ENCODE measurements at regions of chr7 and their contacts with region 1.

Region 1: GRCh38 chr7:116236020-116236630 is 25.8 kb downstream of the TES start:
- DNase-seq: peak; percentile 66
- ATAC-seq: no peak
- H3K4me3 Mint-ChIP-seq: no peak overlapping the region
- H3K27ac Mint-ChIP-seq: no peak overlapping the region
- H3K4me1 Mint-ChIP-seq: peaks cover 70% of the 10 kb centered on the region
- H3K27me3 Mint-ChIP-seq: no peaks in the 10 kb centered on the region

Region 2: DNA sequence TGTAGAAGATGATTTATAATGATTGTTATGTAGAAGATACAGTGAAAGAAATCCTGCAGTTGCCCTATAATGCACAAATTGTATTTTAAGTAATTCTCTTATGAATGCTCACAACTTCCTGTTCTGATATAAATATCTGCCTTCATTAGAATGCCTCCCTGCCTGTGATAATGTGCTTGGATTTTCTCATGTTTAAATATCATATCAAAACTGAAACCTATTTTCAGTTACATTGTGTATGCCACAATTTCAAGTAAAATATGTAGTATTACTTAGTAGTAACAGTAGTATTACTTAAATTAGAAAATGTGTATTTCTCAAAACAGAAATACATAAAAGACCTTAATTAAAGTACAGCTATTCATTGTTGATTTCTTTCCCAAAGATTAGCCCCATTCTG is 164.5 kb before region 1 on chr7:
- CTCF ChIA-PET with region 1: no interaction called
- POLR2A ChIA-PET with region 1: no interaction called
- intact Hi-C with region 1: no loop called
- DNase-seq: no peak
- ATAC-seq: no peak
- H3K4me3 Mint-ChIP-seq: no peak overlapping the region
- H3K27ac Mint-ChIP-seq: no peak overlapping the region
- H3K4me1 Mint-ChIP-seq: no peaks in the 10 kb centered on the region
- H3K27me3 Mint-ChIP-seq: no peaks in the 10 kb centered on the region

Region 3: GRCh38 chr7:116138202-116138801 is 97.8 kb before region 1 on chr7:
- CTCF ChIA-PET with region 1: interaction called, 27 read pairs
- POLR2A ChIA-PET with region 1: no interaction called
- intact Hi-C with region 1: loop called in 1 of 2 experiments (anchors 1 kb)
- DNase-seq: peak; percentile 11
- ATAC-seq: peak; percentile 91
- H3K4me3 Mint-ChIP-seq: no peak overlapping the region
- H3K27ac Mint-ChIP-seq: no peak overlapping the region
- H3K4me1 Mint-ChIP-seq: peaks cover 9% of the 10 kb centered on the region
- H3K27me3 Mint-ChIP-seq: no peaks in the 10 kb centered on the region

Region 4: DNA sequence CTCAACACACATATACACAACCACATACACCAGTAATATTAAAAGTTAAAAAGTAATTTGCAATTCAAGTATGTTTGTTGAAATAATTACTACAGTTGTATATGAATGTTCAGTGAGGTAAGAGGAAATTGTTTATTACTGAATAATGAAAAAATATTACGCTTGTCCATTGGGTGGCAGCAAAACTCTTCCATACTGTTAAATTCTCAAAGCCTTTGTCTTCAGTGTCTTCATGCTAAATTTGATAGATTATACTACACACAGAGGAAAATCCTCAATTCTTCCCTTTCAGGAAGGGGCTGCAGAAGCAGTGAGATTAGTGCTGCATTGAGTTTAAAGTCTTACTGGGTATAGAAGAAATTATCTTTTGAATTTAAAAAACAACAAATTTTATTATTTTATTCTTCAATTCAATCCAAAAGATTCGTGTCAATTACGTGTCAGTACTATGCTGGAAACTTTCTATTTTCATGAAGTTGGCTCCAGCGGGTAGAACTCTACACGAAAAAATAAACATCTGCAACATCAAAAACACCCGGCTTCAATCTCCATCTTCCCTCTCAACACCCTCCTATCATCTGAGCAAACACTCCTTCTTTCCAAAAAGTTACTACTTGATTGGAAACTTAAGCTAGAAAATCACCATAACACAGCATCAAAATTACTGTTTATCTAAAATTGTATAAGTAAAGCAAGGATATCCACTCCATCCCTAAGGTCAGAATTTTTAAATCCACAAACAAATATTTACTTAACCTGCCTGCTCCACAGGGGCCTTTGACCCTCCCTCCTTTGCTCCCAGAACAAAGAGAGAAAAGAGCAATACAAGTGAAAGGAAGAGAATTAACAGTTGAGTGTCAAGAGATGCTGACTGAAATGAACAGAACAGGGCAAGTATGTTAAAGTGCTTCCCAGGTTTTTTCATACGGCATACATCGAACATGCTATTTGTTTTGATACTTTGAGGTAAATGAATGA is 62.8 kb before region 1 on chr7:
- CTCF ChIA-PET with region 1: interaction called, 293 read pairs
- POLR2A ChIA-PET with region 1: interaction called, 3 read pairs
- intact Hi-C with region 1: loop called in 1 of 2 experiments (anchors 2 kb)
- DNase-seq: peak; percentile 15
- ATAC-seq: no peak
- H3K4me3 Mint-ChIP-seq: no peak overlapping the region
- H3K27ac Mint-ChIP-seq: no peak overlapping the region
- H3K4me1 Mint-ChIP-seq: no peaks in the 10 kb centered on the region
- H3K27me3 Mint-ChIP-seq: peaks cover 6% of the 10 kb centered on the region

Region 5: DNA sequence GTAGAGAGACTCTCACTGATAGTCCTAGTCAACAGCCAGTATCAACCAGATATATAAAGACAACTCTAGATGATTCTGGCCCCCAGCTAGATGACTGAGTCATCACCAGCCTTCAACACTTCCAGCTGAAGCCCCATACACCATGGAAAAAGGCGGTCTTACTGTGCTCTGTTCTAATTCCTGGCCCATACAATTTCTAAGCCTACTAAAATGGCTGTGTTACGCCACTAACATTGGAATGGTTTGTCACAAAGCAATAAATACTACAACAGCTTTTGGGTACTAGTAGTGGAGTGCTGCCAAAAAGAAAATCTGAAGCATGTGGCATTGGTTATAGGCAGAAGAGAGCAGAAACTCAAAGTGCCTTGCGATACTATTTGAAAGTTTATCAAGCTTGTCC is 38.8 kb before region 1 on chr7:
- CTCF ChIA-PET with region 1: interaction called, 15 read pairs
- POLR2A ChIA-PET with region 1: no interaction called
- intact Hi-C with region 1: no loop called
- DNase-seq: no peak
- ATAC-seq: no peak
- H3K4me3 Mint-ChIP-seq: no peak overlapping the region
- H3K27ac Mint-ChIP-seq: no peak overlapping the region
- H3K4me1 Mint-ChIP-seq: no peaks in the 10 kb centered on the region
- H3K27me3 Mint-ChIP-seq: peaks cover 1% of the 10 kb centered on the region

Region 6: DNA sequence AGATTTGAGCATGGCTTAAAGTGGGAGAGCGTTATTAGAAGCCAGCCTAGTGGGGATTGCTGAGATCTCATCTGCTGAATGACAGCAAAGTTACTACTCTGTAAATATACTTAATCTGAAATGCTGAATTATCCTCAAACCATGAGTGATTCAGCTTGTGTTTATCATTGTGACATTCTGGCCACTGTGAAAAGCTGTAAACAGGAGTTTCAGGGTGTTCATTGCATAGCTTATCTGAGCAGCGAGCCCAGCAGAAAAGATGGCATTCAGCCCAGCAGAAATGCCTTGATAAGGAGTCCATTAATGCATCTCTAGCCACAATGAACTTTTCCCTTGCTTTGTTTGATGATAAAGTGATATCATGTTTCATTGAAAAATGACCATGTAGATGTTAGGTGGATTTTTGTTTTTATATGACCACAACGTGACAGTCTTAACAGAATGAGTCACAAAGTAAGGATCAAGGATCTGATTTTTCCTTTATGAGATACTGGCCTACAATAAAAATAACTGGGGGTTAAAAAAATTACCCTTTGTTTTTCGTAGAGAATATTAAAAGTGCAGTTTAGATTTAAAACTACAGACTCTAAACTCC is 18.0 kb before region 1 on chr7:
- CTCF ChIA-PET with region 1: interaction called, 24 read pairs
- POLR2A ChIA-PET with region 1: interaction called, 3 read pairs
- intact Hi-C with region 1: no loop called
- DNase-seq: no peak
- ATAC-seq: no peak
- H3K4me3 Mint-ChIP-seq: no peak overlapping the region
- H3K27ac Mint-ChIP-seq: peak overlapping the region; percentile 72
- H3K4me1 Mint-ChIP-seq: peaks cover 86% of the 10 kb centered on the region
- H3K27me3 Mint-ChIP-seq: no peaks in the 10 kb centered on the region

Region 7: DNA sequence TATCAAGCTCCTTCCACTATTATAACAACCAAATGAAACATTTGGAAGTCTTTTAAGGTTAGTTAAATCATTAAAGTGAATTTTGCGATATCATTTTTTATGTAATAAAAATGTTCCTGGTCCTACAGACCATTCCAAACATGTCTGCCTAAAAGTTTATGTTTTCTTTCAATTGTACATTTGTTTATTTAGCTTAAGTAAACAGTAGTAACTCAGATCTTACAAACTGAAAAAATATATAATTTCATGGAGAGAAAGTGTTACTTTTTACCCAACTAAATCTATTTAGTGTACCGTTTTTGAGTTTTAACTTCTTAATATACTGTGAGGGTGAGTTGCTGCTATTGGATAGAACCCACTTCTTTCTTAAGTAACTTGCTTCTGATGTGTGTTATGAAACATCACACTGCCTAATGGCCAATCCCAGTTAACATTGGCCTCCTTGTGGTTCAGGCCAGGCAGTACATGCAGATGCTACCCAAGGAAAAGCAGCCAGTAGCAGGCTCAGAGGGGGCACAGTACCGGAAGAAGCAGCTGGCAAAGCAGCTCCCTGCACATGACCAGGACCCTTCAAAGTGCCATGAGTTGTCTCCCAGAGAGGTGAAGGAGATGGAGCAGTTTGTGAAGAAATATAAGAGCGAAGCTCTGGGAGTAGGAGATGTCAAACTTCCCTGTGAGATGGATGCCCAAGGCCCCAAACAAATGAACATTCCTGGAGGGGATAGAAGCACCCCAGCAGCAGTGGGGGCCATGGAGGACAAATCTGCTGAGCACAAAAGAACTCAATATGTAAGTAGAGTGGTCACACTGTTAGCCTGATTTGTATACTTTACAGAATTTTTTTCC is 13.8 kb after region 1 on chr7:
- CTCF ChIA-PET with region 1: interaction called, 13 read pairs
- POLR2A ChIA-PET with region 1: no interaction called
- intact Hi-C with region 1: no loop called
- DNase-seq: no peak
- ATAC-seq: peak; percentile 72
- H3K4me3 Mint-ChIP-seq: no peak overlapping the region
- H3K27ac Mint-ChIP-seq: peak overlapping the region; percentile 58
- H3K4me1 Mint-ChIP-seq: peaks cover 36% of the 10 kb centered on the region
- H3K27me3 Mint-ChIP-seq: no peaks in the 10 kb centered on the region